ENCODE measurements at regions of chr19 and their contacts with region 1.

Region 1: DNA sequence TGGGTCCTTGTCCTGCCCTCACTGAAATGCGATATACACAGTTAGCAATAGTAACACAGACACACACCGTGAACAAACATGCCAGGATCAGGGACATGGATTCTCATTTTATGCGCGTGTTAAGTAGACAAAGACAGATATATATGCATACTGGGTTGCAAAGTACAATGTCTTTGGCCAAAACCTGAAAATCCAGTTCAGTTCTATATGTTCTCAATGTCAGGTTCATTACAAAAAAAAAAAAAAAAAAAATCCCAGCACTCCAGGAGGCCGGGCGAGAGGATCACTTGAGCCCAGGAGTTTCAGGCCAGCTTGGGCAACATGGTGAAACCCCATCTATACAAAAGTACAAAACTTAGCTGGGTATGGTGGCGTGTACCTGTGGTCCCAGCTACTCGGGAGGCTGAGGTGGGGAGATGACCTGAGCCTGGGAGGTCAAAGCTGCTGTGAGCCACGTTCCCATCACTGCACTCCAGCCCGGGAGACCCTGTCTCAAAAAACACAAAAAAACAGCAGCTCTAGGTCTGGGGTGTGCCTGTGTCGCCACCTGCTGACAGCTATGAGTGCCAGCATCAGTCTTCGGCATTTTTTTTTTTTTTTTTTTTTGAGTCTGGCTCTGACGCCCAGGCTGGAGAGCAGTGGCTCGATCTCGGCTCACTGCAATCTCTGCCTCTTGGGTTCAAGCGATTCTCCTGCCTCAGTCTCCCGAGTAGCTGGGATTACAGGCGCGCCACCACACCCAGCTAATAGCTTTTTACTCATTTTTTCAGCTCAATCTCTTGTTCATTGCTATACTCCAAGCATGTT is 10.3 kb downstream of the AP2S1 start:
- DNase-seq: peak in 2 of 5 donors; percentile 48 to 49
- ATAC-seq: peak; percentile 34 to 68 (median 58)
- H3K4me3 ChIP-seq: no peak overlapping the region
- H3K27ac ChIP-seq: peak overlapping the region in 10 of 12 donors; percentile 26 to 83 (median 64)
- H3K4me1 ChIP-seq: peaks cover 0 to 27% (median 13%) of the 10 kb centered on the region in 12 donors
- H3K27me3 ChIP-seq: no peaks in the 10 kb centered on the region
- CTCF ChIP-seq: peak; percentile 73 to 89 (median 82)
- POLR2A ChIP-seq: peak in 1 of 2 donors; percentile 11

Region 2: DNA sequence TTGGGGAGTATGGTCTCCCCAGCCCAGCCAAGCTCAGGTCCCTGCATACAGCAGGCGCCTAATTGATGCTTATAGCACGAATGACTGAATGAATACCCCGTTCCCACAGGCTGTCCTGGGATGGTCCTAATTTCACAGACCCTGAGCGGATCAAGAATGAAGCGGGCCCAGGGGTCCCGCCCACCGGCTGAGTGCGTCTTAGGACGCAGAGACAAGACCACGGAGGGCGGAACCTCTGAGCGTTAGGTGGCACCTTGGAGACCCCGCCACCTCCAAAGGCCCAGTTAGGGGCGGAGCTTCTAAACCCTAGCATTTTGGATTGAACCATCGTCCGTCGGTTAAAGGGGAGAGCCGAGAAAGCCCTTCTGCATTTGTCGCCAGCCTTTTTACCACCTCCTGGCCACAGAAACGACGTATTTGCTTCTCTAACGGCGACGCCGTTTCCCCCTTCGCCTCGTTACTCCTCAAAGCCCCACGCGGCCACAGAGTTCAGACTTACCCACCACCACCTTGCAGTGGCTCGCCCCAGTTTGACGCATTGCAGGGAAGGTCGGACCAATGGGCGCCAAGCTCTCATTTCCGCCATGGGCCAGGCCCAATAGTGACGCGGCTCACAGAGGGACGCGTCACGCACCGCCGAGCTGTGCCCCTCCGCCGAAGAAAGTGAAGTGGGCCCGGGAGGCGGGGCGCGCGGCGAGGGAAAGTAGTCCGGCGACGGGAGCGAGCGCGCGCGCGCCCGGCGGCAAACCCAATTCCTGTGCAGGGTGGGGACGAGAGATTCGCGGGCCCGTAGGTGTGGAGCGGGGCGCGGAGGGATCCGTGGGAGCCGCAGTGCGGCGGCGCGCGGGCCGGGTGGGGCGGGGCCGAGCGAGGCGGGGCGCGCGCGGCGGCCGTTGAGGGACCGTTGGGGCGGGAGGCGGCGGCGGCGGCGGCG is 239.7 kb before region 1 on chr19:
- intact Hi-C with region 1: loop called in 1 of 10 experiments (anchors 10 kb)
- DNase-seq: peak; percentile 96 to 99 (median 98)
- ATAC-seq: peak; percentile 90 to 92 (median 90)
- H3K4me3 ChIP-seq: peak overlapping the region; percentile 86 to 100 (median 100)
- H3K27ac ChIP-seq: peak overlapping the region; percentile 92 to 100 (median 99)
- H3K4me1 ChIP-seq: peaks cover 0 to 46% (median 36%) of the 10 kb centered on the region in 12 donors
- H3K27me3 ChIP-seq: no peaks in the 10 kb centered on the region
- CTCF ChIP-seq: peak in 1 of 12 donors; percentile 3
- POLR2A ChIP-seq: peak in 1 of 2 donors; percentile 55

Region 3: GRCh38 chr19:46614114-46614722 is 226.1 kb before region 1 on chr19:
- intact Hi-C with region 1: loop called in 2 of 10 experiments (anchors 10 kb)
- DNase-seq: peak; percentile 82 to 91 (median 84)
- ATAC-seq: peak; percentile 53 to 77 (median 76)
- H3K4me3 ChIP-seq: no peak overlapping the region
- H3K27ac ChIP-seq: peak overlapping the region in 1 of 12 donors; percentile 30
- H3K4me1 ChIP-seq: peaks cover 0 to 55% (median 24%) of the 10 kb centered on the region in 12 donors
- H3K27me3 ChIP-seq: no peaks in the 10 kb centered on the region
- CTCF ChIP-seq: peak; percentile 76 to 96 (median 88)
- POLR2A ChIP-seq: no peak

Region 4: GRCh38 chr19:46753420-46754155 is 86.8 kb before region 1 on chr19:
- intact Hi-C with region 1: loop called (anchors 1 to 5 kb)
- DNase-seq: no peak
- ATAC-seq: peak in 2 of 4 donors; percentile 13 to 19
- H3K4me3 ChIP-seq: no peak overlapping the region
- H3K27ac ChIP-seq: no peak overlapping the region
- H3K4me1 ChIP-seq: peaks cover 0 to 25% (median 4%) of the 10 kb centered on the region in 12 donors
- H3K27me3 ChIP-seq: no peaks in the 10 kb centered on the region
- CTCF ChIP-seq: peak; percentile 20 to 61 (median 45)
- POLR2A ChIP-seq: no peak

Region 5: GRCh38 chr19:46759817-46760333 is 80.5 kb before region 1 on chr19:
- intact Hi-C with region 1: loop called (anchors 1 to 5 kb)
- DNase-seq: no peak
- ATAC-seq: no peak
- H3K4me3 ChIP-seq: no peak overlapping the region
- H3K27ac ChIP-seq: peak overlapping the region in 2 of 12 donors; percentile 42 to 49
- H3K4me1 ChIP-seq: peaks cover 0 to 37% (median 6%) of the 10 kb centered on the region in 12 donors
- H3K27me3 ChIP-seq: no peaks in the 10 kb centered on the region
- CTCF ChIP-seq: no peak
- POLR2A ChIP-seq: no peak

Region 6: GRCh38 chr19:46788262-46788967 is 51.9 kb before region 1 on chr19 and contains the start of gene SLC1A5:
- intact Hi-C with region 1: loop called in 1 of 10 experiments (anchors 10 kb)
- DNase-seq: peak; percentile 95 to 98 (median 96)
- ATAC-seq: peak; percentile 86 to 95 (median 94)
- H3K4me3 ChIP-seq: peak within 1 kb of the TSS; percentile 24 to 80 (median 64)
- H3K27ac ChIP-seq: peak within 1 kb of the TSS; percentile 49 to 95 (median 82)
- H3K4me1 ChIP-seq: peaks cover 0 to 49% (median 26%) of the 10 kb centered on the region in 12 donors
- H3K27me3 ChIP-seq: peaks cover 0 to 11% (median 0%) of the 10 kb centered on the region in 9 donors
- CTCF ChIP-seq: peak in 1 of 12 donors; percentile 5
- POLR2A ChIP-seq: peak; percentile 3 to 93
- total RNA-seq, gene SLC1A5: 3.7 to 22.4 (median 8.9) TPM

Region 7: GRCh38 chr19:48724796-48725753 is 1884.7 kb after region 1 on chr19:
- intact Hi-C with region 1: no loop called
- DNase-seq: peak in 4 of 5 donors; percentile 75 to 89 (median 84)
- ATAC-seq: peak; percentile 12 to 63 (median 36)
- H3K4me3 ChIP-seq: peak overlapping the region in 4 of 12 donors; percentile 1 to 22 (median 17)
- H3K27ac ChIP-seq: peak overlapping the region; percentile 81 to 97 (median 90)
- H3K4me1 ChIP-seq: peaks cover 5 to 51% (median 26%) of the 10 kb centered on the region in 12 donors
- H3K27me3 ChIP-seq: no peaks in the 10 kb centered on the region
- CTCF ChIP-seq: no peak
- POLR2A ChIP-seq: no peak

Measured in heart left ventricle (tissue), 16 donors.